ENCODE measurements at regions of chr2 and their contacts with region 1.

Region 1: DNA sequence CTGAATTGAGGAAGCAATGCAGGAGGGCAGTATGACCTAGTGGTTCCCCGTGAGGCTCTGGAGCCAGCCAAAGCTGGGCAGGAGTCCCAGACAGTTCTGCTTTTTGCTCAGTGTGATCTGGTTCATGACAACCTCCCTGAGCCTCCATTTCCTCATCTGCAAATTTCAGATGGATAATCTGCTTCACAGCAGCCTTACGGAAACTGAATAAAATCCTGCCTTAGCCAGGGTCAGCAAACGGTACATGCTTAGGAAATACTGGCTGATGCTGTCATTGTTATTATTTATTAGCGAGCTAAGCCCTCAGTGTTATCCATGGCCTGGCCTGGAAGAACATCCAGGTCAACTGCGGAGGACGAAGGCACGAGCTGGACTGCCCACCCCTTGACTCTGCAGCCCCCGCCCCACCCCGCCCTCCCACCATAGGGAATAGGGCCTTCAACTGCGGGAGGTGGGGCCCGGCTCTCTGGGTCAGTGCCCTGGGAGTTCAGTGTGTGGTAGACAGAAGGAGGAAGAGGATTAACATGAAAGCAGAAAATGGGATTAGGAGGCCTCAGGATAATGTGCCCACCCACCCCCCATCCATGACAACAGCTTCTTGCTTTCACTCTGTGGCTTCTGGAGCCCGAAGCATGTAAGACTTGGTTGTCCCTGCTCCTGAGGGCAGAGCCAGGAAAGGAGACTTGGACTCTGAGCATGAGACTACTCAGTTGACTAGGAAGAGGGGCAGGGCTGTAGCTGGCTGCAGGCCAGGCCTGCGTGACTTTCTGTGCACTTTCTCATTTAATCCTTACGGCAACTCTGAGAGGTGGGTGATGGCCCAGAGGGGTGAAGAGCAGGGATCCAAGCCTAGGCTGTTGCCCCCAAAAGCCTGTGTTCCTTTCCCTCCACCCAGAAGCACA is 13.1 kb downstream of the PKDCC start:
- DNase-seq: no peak
- H3K4me3 ChIP-seq: no peak overlapping the region
- H3K27ac ChIP-seq: no peak overlapping the region; the same call in 1 of the 2 replicates
- H3K4me1 ChIP-seq: peaks cover 0 to 2% (median 0%) of the 10 kb centered on the region in 4 experiments; a peak in 2 of 7 replicates
- H3K27me3 ChIP-seq: no peaks in the 10 kb centered on the region; a peak in 1 of 7 replicates
- CTCF ChIP-seq: no peak
- EP300 ChIP-seq: no peak
- POLR2A ChIP-seq: no peak
- RAD21 ChIP-seq: no peak

Region 2: GRCh38 chr2:42072349-42073118 is 11.6 kb after region 1 on chr2:
- CTCF ChIA-PET with region 1: interaction called, 19 read pairs
- POLR2A ChIA-PET with region 1: interaction called, 8 read pairs
- DNase-seq: no peak
- H3K4me3 ChIP-seq: no peak overlapping the region
- H3K27ac ChIP-seq: no peak overlapping the region
- H3K4me1 ChIP-seq: peaks cover 0 to 9% (median 0%) of the 10 kb centered on the region in 4 experiments; a peak in 3 of 7 replicates
- H3K27me3 ChIP-seq: no peaks in the 10 kb centered on the region
- CTCF ChIP-seq: peak; percentile 9 to 30 (median 19)
- EP300 ChIP-seq: no peak
- POLR2A ChIP-seq: no peak
- RAD21 ChIP-seq: peak in 1 of 2 experiments; percentile 19; a peak in 1 of 4 replicates

Region 3: DNA sequence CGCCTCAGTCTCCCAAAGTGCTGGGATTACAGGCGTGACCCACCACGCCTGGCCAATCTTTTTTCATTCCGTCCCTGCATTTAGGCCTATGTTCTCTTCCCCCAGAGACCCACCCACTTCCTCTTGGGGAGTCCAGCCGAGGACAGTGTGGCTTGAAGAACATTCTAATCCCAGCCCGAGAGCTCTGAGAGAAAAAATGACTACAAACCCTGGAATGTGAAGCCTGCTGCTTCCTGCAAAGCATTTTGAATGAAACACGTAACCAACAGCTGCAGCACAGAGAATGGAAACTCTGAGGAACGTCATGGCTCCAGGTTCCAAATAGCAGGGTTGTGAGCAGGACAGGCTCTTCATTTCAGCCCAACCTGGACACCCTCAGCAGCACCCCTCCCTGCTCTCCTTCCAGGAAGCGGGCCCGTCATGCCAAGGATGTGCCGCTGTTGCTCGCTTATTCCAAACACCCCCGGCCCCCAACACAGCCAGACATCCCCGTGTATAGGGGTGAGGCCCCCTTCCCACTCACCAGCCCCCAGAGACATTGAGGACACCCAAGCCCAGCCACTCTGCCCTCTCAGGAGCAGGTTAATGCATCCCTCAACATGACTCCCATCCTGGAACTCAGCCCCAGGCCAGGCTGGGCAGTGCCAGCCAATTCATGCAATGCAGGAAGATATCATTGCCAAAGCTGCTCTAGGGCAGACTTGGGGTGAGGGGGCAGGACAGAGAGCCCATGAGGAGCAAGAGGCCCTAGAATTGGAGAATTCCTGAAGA is 1025.7 kb after region 1 on chr2:
- CTCF ChIA-PET with region 1: no interaction called
- POLR2A ChIA-PET with region 1: no interaction called
- DNase-seq: peak in 1 of 2 experiments; percentile 19
- H3K4me3 ChIP-seq: no peak overlapping the region
- H3K27ac ChIP-seq: no peak overlapping the region
- H3K4me1 ChIP-seq: peaks cover 0 to 16% (median 8%) of the 10 kb centered on the region in 4 experiments; a peak in 5 of 7 replicates
- H3K27me3 ChIP-seq: no peaks in the 10 kb centered on the region
- CTCF ChIP-seq: no peak
- EP300 ChIP-seq: no peak
- POLR2A ChIP-seq: no peak
- RAD21 ChIP-seq: no peak

Measured in H1 (cell line).